Activated T-helper 2 cell treated with anti-CD3 and anti-CD28 coated beads, Interferon-gamma antibody, Interleukin-2, Interleukin-4, amounts not matched to agents 10 μg/mL and 5 μg/mL and 100 μg/mL, durations not matched to agents 14 hours and 24 hours and 36 hours (primary cell): ENCODE measurements at regions of chr2 and their contacts with region 1.

Region 1: GRCh38 chr2:105674859-105675541 is 69.7 kb upstream of the NCK2 start:
- DNase-seq: no peak
- H3K4me3 Mint-ChIP-seq: no peak overlapping the region
- H3K27ac Mint-ChIP-seq: peak overlapping the region; percentile 42
- H3K4me1 Mint-ChIP-seq: peaks cover 9% of the 10 kb centered on the region
- H3K27me3 Mint-ChIP-seq: no peaks in the 10 kb centered on the region

Region 2: DNA sequence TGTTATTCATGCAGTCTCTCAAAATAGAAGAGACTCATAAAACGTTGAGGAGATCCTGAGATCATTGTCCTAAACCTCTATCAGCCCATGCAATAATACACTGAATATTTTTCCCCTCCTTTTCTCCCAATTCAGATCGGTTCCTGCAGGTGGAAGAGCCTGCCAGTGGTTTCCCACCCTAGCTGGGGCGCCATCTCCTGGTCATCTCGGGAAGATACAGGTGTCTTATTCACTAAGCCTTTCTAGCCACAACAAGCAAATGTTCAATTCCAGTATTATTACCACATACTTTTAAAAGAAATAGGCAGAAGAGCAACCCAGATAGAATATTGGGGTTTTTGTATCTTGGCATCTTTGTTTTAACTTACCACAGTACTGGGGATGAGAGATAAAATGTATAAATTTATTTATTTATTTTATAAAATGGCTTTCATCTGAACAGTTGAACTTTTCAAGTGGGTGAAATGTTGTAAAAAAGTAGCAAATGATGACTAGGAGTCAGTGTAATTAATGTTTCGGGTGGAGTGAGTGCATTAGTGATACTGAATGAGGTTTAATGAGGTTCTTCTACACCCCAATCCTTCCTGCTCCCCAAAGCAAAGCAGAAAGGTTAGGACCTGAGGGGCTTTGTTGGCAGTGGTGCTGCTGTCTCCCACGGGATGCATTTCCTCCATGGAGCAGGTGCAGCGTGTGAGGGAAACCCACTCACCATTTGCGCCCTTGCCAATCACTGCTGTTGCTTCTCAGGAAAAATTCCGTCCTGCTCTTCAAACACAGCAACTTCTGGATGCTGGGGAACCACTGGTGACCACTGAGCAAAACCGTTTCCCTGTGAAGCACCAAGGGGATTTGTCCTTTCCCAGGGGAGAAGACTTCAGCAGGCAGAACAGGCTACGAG is 129.0 kb before region 1 on chr2:
- intact Hi-C with region 1: no loop called
- DNase-seq: peak; percentile 42
- H3K4me3 Mint-ChIP-seq: no peak overlapping the region
- H3K27ac Mint-ChIP-seq: no peak overlapping the region
- H3K4me1 Mint-ChIP-seq: peaks cover 4% of the 10 kb centered on the region
- H3K27me3 Mint-ChIP-seq: peaks cover 14% of the 10 kb centered on the region

Region 3: DNA sequence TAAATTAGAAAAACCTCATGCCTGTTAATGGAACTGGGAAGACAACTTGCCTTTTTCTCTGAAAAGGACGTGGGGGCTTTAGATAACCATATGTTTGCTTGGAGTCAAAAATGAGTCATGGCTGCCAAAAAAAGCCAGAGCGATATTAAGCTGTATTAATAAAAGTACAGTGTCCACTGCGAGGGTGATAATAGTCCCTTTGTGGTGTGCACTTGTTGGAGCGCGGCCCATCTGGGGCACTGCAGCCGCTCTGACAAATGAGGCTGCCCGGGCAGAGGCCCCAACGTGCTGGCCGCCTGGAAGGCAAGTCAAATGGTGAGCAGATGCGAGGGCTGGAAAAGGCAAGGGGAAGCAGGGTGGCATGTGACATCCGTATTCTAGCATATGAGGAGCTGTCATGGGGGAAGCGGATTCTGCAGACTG is 33.6 kb before region 1 on chr2:
- intact Hi-C with region 1: no loop called
- DNase-seq: no peak
- H3K4me3 Mint-ChIP-seq: no peak overlapping the region
- H3K27ac Mint-ChIP-seq: no peak overlapping the region
- H3K4me1 Mint-ChIP-seq: no peaks in the 10 kb centered on the region
- H3K27me3 Mint-ChIP-seq: peaks cover 14% of the 10 kb centered on the region

Region 4: GRCh38 chr2:105734762-105735538 is 60.0 kb after region 1 on chr2:
- intact Hi-C with region 1: loop called (anchors 5 kb)
- DNase-seq: no peak
- H3K4me3 Mint-ChIP-seq: no peak overlapping the region
- H3K27ac Mint-ChIP-seq: no peak overlapping the region
- H3K4me1 Mint-ChIP-seq: peaks cover 48% of the 10 kb centered on the region
- H3K27me3 Mint-ChIP-seq: no peaks in the 10 kb centered on the region

Region 5: DNA sequence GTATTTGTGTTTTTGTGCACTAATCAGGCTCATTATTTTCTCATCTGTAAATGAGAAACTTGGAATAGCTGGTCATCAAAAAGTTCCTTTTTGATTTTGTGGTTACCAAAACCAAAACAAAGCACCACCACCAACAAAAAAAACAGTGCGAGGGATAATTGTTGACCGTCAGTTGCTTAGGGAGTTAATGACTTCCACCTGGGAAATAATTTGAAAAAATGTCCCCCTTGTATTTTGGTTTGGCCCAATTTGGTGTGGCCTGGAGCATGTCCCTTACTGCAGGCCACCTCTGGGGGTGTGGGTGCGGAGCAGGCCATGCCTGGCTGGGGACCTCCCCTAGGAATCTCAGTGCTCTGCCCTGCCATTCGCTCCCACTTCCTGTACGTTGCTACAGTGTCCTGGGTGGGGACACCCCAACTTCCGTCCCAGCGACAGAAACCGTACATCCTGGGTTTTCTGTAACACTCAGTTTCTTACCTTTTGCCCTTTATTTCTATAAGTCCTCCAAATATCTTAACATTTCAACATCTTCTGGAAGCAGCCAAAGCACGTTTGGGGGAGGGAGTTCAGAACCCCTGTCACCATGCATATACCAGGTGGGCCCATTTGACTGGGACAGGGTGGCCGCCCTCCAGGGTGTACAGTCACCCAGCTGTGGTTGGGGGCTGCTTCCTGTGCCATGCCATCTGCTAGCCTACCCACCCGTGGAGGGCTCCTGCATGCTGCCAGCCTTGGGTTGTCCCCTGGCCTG is 101.0 kb after region 1 on chr2:
- intact Hi-C with region 1: no loop called
- DNase-seq: no peak
- H3K4me3 Mint-ChIP-seq: peak overlapping the region; percentile 57
- H3K27ac Mint-ChIP-seq: peak overlapping the region; percentile 78
- H3K4me1 Mint-ChIP-seq: peaks cover 73% of the 10 kb centered on the region
- H3K27me3 Mint-ChIP-seq: no peaks in the 10 kb centered on the region